Ascending aorta (tissue), 2 donors: ENCODE measurements at regions of chr10 and their contacts with region 1.

Region 1: DNA sequence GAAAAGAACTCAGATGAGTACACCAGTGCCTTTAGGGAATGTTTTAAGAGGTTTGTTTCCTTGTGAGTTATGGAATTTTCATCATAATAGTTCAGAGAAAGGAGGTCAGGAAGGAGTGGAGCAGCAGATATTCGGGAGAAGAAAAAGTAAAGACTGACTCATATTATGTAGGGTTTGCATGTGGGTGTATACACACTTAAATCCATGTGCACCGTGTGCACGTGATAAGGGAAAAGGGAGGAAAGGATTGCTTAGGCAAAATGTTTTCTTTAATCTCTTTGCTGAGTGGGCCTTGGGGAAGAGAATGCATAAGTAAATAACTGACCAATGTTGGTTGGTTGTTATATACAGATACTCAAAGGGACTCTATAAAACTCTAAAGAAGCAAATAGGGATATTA is 30.2 kb downstream of the PLCE1 start:
- DNase-seq: no peak
- H3K4me3 ChIP-seq: no peak overlapping the region
- H3K27ac ChIP-seq: no peak overlapping the region
- H3K4me1 ChIP-seq: no peaks in the 10 kb centered on the region
- H3K27me3 ChIP-seq: no peaks in the 10 kb centered on the region
- CTCF ChIP-seq: no peak

Region 2: GRCh38 chr10:94066411-94066810 is 42.5 kb after region 1 on chr10:
- intact Hi-C with region 1: loop called (anchors 5 kb)
- DNase-seq: no peak
- H3K4me3 ChIP-seq: no peak overlapping the region
- H3K27ac ChIP-seq: no peak overlapping the region
- H3K4me1 ChIP-seq: no peaks in the 10 kb centered on the region
- H3K27me3 ChIP-seq: no peaks in the 10 kb centered on the region
- CTCF ChIP-seq: no peak